Activated CD8-positive, alpha-beta T cell treated with anti-CD3 and anti-CD28 coated beads, Interleukin-2, amount 10 ng/mL, durations not matched to agents 7 days and 5 days (primary cell): ENCODE measurements at regions of chr9 and their contacts with region 1.

Region 1: GRCh38 chr9:122904823-122905710 is at the start of gene RC3H2:
- DNase-seq: peak; percentile 98
- ATAC-seq: peak; percentile 91
- H3K4me3 Mint-ChIP-seq: peak within 1 kb of the TSS; percentile 94
- H3K27ac Mint-ChIP-seq: peak within 1 kb of the TSS; percentile 92
- H3K4me1 Mint-ChIP-seq: peaks cover 22% of the 10 kb centered on the region
- H3K27me3 Mint-ChIP-seq: no peaks in the 10 kb centered on the region
- total RNA-seq, gene RC3H2: 40.3 to 43.6 TPM

Region 2: DNA sequence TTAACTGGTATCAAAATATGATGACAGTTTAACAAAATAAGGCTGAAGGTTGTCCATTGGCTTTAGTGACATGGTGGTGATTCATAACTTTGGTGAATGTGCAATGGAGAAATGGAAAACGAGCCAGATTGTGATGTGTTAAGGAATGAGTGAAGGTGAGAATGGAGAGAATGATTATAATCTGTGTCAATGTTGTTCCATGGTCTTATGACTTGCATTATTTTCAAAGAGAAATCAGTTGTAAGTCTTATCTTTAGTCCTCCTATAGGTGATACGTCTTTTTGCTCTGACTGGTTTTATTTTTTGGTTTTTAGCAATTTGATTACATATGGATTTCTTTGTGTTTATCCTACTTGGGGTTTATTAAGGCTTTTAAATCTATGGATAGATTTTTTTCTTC is 150.2 kb before region 1 on chr9:
- CTCF ChIA-PET with region 1: no interaction called
- POLR2A ChIA-PET with region 1: no interaction called
- DNase-seq: no peak
- ATAC-seq: no peak
- H3K4me3 Mint-ChIP-seq: no peak overlapping the region
- H3K27ac Mint-ChIP-seq: no peak overlapping the region
- H3K4me1 Mint-ChIP-seq: no peaks in the 10 kb centered on the region
- H3K27me3 Mint-ChIP-seq: peaks cover 2% of the 10 kb centered on the region

Region 3: GRCh38 chr9:122835313-122835731 is 69.7 kb before region 1 on chr9:
- CTCF ChIA-PET with region 1: interaction called, 13 read pairs
- POLR2A ChIA-PET with region 1: interaction called, 11 read pairs
- DNase-seq: peak; percentile 62
- ATAC-seq: peak; percentile 85
- H3K4me3 Mint-ChIP-seq: peak overlapping the region; percentile 59
- H3K27ac Mint-ChIP-seq: peak overlapping the region; percentile 91
- H3K4me1 Mint-ChIP-seq: peaks cover 21% of the 10 kb centered on the region
- H3K27me3 Mint-ChIP-seq: no peaks in the 10 kb centered on the region

Region 4: GRCh38 chr9:122883125-122883524 is 21.9 kb before region 1 on chr9:
- CTCF ChIA-PET with region 1: no interaction called
- POLR2A ChIA-PET with region 1: no interaction called
- DNase-seq: no peak
- ATAC-seq: no peak
- H3K4me3 Mint-ChIP-seq: no peak overlapping the region
- H3K27ac Mint-ChIP-seq: peak overlapping the region; percentile 15
- H3K4me1 Mint-ChIP-seq: no peaks in the 10 kb centered on the region
- H3K27me3 Mint-ChIP-seq: no peaks in the 10 kb centered on the region

Region 5: DNA sequence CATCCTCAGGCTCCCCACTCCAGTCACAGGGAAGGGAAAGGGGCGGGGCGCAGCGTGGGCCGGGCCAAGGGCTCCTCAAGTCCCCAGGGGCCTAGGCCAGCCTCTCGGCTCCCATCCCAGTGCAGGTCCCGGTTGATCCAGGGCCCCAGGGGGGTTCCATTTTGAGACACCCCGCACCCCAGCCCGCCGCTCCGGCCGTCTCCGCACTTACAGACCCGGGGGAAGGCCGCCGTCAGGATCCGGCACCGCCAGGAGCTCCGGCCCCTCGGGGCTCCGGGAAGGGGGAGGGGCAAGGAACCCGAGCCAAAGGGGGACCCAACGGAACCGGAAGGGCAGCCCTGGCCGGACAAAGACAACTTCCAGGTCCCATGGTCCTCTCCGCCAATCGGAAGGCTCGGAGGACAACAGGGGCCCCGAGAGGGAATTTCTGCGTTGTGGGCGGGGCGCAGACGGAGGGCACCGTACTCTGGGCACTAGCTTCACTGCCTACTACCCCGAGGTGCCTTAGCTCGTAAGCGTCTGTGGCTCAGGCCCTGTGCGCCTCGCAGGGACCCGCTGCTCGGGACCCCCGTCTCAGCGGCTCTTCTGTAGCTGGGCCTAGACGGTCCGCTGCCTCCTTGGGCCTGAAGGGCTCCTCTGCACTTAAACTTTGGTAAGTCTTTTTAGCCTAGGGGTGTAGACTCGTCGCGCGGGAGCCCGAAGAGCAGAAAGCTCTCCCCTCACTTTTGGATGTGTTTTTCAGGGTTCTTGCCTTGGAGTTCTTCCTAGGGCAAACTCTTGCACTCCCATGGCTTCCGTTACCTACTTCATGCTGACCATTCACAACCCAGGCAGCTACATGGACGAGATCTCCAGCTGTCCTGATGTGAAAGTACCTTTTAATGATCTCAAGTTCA is 26.4 kb after region 1 on chr9 and contains the start of gene ZBTB26:
- CTCF ChIA-PET with region 1: interaction called, 9 read pairs
- POLR2A ChIA-PET with region 1: interaction called, 22 read pairs
- DNase-seq: peak; percentile 91
- ATAC-seq: peak; percentile 98
- H3K4me3 Mint-ChIP-seq: no peak within 1 kb of the TSS
- H3K27ac Mint-ChIP-seq: peak within 1 kb of the TSS; percentile 90
- H3K4me1 Mint-ChIP-seq: peaks cover 12% of the 10 kb centered on the region
- H3K27me3 Mint-ChIP-seq: no peaks in the 10 kb centered on the region
- total RNA-seq, gene ZBTB26: 6.6 to 7.1 TPM

Region 6: GRCh38 chr9:122940603-122941559 is 35.8 kb after region 1 on chr9 and contains the start of gene RABGAP1:
- CTCF ChIA-PET with region 1: interaction called, 3 read pairs
- POLR2A ChIA-PET with region 1: interaction called, 28 read pairs
- DNase-seq: peak; percentile 99
- ATAC-seq: peak; percentile 99
- H3K4me3 Mint-ChIP-seq: peak within 1 kb of the TSS; percentile 91
- H3K27ac Mint-ChIP-seq: peak within 1 kb of the TSS; percentile 86
- H3K4me1 Mint-ChIP-seq: peaks cover 35% of the 10 kb centered on the region
- H3K27me3 Mint-ChIP-seq: no peaks in the 10 kb centered on the region
- total RNA-seq, gene RABGAP1: 27.8 to 28.0 TPM

Region 7: GRCh38 chr9:122991370-122991830 is 86.3 kb after region 1 on chr9:
- CTCF ChIA-PET with region 1: interaction called, 17 read pairs
- POLR2A ChIA-PET with region 1: no interaction called
- DNase-seq: peak; percentile 33
- ATAC-seq: peak; percentile 79
- H3K4me3 Mint-ChIP-seq: no peak overlapping the region
- H3K27ac Mint-ChIP-seq: no peak overlapping the region
- H3K4me1 Mint-ChIP-seq: peaks cover 4% of the 10 kb centered on the region
- H3K27me3 Mint-ChIP-seq: no peaks in the 10 kb centered on the region